Prostate gland (tissue), 2 donors: ENCODE measurements at regions of chr17 and their contacts with region 1.

Region 1: GRCh38 chr17:36133602-36134236 is 30.1 kb downstream of the CCL4 start:
- DNase-seq: no peak
- H3K4me3 ChIP-seq: no peak overlapping the region
- H3K27ac ChIP-seq: no peak overlapping the region
- H3K4me1 ChIP-seq: no peaks in the 10 kb centered on the region
- H3K27me3 ChIP-seq: no peaks in the 10 kb centered on the region
- CTCF ChIP-seq: no peak
- POLR2A ChIP-seq: no peak

Region 2: DNA sequence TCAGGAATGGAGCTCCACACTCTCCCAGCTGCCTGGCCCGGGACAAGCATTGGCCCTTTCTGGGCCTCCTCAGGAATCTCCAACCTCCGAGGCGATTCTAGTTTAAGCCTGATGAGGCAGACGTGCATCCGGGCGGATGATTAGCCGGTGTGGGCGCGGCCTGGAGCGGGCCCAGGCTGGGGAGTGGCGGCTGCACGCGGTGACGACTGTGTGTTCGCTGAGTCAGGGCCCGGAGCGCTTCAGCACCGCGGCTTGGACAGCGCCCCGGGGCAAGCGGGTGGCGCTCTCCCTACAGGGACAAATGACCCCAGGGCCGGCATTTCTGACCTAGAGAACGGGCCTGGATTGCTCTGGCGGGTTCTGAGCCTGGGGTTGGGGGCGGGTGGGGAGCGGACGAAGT is 330.2 kb after region 1 on chr17:
- intact Hi-C with region 1: loop called (anchors 10 kb)
- DNase-seq: peak; percentile 32
- H3K4me3 ChIP-seq: no peak overlapping the region
- H3K27ac ChIP-seq: no peak overlapping the region
- H3K4me1 ChIP-seq: no peaks in the 10 kb centered on the region
- H3K27me3 ChIP-seq: peaks cover 11% of the 10 kb centered on the region
- CTCF ChIP-seq: no peak
- POLR2A ChIP-seq: no peak